ENCODE measurements at regions of chr3 and their contacts with region 1.

Region 1: GRCh38 chr3:64267721-64268604 is 42.7 kb upstream of the PRICKLE2 start:
- DNase-seq: peak; percentile 64
- H3K4me3 ChIP-seq: peak overlapping the region; percentile 65
- H3K27ac ChIP-seq: peak overlapping the region; percentile 76 to 84
- H3K4me1 ChIP-seq: peaks cover 12% of the 10 kb centered on the region
- H3K27me3 ChIP-seq: no peaks in the 10 kb centered on the region
- CTCF ChIP-seq: no peak
- POLR2A ChIP-seq: no peak

Region 2: DNA sequence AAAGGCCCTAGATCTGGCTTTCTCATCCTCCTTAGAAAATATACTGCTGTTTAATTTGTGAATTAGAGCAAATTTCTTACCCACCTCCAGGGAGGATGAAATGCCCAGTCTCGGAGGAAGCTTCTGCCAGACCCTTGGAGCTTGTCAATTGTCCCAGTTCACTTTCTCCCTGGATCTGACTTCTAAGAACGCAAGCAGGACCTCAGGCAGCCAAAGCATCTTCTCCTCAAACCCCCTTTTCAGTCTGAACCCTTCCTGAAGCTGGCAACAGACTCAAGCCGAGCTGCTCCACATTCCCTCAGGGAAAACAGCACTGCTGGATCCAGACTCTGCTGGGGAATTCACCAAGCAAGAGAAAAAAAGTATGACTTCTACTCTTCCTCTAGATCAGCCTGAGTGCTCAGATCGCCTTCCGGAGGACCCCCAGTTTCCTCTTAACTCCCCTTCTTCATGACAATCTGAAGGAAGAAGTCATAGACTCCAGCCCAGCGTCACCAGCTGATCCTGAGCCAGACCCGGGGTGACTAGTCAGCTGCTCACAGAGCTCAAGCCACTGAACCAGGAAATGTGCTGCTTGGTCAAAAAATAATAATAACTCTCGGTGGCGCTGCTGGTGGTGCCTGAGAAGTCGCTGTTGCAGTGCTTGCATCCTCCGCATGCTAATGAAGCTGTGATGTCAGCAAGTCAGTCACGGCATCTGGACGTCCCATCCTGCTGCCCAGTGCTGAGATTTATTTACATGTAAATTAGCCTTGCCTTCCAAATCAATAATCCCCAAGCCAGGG is 42.9 kb before region 1 on chr3 and contains the start of gene PRICKLE2:
- intact Hi-C with region 1: loop called (anchors 5 kb)
- DNase-seq: peak; percentile 85
- H3K4me3 ChIP-seq: peak within 1 kb of the TSS in 1 of 2 donors; percentile 20
- H3K27ac ChIP-seq: peak within 1 kb of the TSS; percentile 81 to 83
- H3K4me1 ChIP-seq: peaks cover 15% of the 10 kb centered on the region
- H3K27me3 ChIP-seq: no peaks in the 10 kb centered on the region
- CTCF ChIP-seq: peak in 1 of 3 experiments; percentile 27
- POLR2A ChIP-seq: no peak
- total RNA-seq, gene PRICKLE2: 9.1 to 10.1 TPM